ENCODE measurements at regions of chr12 and their contacts with region 1.

Region 1: DNA sequence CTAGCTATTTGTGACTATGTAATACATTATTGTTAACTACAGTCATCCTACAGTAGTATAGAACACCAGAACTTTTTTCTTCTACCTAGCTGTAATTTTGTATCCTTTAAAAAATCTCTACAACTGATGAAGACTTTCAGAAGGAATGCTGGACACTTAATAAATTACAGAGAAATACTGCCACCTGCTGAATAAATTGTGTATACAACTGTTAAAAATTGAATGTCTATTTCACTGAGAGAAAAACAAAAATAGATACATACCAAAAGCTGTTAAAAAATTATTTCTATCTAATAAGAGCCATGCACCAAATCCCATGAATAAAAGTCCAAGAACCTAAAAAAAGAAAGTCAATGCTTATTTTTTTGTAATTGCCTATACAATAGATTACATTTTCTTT is 6.6 kb downstream of the TSPAN19 start:
- H3K4me3 ChIP-seq: no peak overlapping the region
- H3K27ac ChIP-seq: no peak overlapping the region
- H3K4me1 ChIP-seq: no peaks in the 10 kb centered on the region
- CTCF ChIP-seq: no peak

Region 2: GRCh38 chr12:84874125-84874824 is 155.2 kb before region 1 on chr12:
- CTCF ChIA-PET with region 1: interaction called, 218 read pairs
- POLR2A ChIA-PET with region 1: no interaction called
- H3K4me3 ChIP-seq: no peak overlapping the region
- H3K27ac ChIP-seq: no peak overlapping the region
- H3K4me1 ChIP-seq: no peaks in the 10 kb centered on the region
- CTCF ChIP-seq: peak; percentile 43; the same call in 1 of the 2 replicates

Region 3: DNA sequence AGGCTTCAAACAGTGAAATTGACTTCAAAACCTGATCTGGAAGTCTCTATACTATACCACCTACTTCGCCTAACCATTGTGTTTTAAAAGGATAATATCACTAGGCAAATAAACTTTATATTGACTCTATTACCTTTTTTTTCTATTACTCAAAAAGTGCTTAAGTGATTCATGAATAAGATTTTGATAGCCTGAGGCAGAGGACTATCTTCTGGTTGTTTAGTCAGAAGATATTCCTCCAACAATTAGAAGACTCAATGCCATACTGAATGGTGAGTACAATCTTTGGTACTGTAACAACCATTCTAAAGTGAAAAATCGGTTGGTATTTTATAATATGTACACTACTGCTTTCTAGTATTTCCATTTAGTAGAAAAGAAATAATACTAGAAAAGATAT is 139.6 kb before region 1 on chr12:
- CTCF ChIA-PET with region 1: interaction called, 15 read pairs
- POLR2A ChIA-PET with region 1: no interaction called
- H3K4me3 ChIP-seq: no peak overlapping the region
- H3K27ac ChIP-seq: no peak overlapping the region
- H3K4me1 ChIP-seq: no peaks in the 10 kb centered on the region
- CTCF ChIP-seq: no peak

Region 4: DNA sequence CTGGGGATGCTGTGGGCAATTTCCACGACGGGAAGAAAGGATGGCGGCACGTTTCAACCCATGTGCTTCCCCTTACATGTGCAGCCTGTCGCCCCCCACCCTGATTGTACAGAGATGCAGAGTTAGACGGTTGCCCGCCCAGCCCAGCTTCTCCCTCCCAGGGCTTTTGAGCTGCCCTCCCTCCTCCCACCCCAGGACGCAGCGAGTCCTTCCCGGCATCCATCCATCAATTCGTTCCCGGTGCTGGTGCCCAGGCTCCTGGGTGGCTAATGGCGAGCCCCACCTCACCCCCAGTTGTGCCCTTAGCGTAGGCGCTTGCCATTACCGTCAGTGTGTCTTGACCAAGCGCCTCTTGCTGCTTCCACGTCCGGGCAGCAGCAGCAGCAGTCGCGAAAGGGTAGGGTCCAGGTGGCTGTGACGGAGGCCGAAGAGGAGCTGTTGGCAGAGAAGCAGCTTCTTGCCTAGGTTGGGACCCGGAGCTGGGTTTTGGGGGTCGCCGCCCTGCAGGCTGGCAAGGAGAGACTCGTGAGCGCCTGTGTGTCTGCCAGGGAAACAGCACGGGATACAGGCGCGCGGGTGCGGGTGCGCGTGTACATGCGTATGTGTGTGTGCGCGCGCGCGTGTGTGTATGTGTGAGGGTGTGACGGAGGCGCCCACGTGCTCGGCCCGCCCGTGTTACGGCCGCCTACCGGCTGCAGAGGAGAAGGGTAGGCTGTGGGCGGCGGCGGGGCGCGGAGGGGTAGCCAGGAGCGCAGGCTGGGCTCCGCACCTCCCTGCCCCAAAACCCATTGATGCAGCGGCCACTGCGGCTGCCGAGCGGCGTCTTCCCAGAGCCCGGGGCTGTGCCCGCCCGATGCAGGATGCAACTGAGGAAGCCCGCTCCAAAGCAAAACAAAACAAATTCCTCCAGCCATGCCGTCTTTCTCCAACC is 117.0 kb before region 1 on chr12 and contains the start of gene SLC6A15:
- CTCF ChIA-PET with region 1: interaction called, 12 read pairs
- POLR2A ChIA-PET with region 1: no interaction called
- H3K4me3 ChIP-seq: peak within 1 kb of the TSS; percentile 79
- H3K27ac ChIP-seq: peak within 1 kb of the TSS; percentile 87
- H3K4me1 ChIP-seq: no peaks in the 10 kb centered on the region
- CTCF ChIP-seq: peak; percentile 92

Region 5: GRCh38 chr12:85057370-85057963 is 28.0 kb after region 1 on chr12:
- CTCF ChIA-PET with region 1: interaction called, 22 read pairs
- POLR2A ChIA-PET with region 1: no interaction called
- H3K4me3 ChIP-seq: no peak overlapping the region
- H3K27ac ChIP-seq: no peak overlapping the region
- H3K4me1 ChIP-seq: no peaks in the 10 kb centered on the region
- CTCF ChIP-seq: no peak